Spleen (tissue), 13 donors: ENCODE measurements at regions of chr3 and their contacts with region 1.

Region 1: DNA sequence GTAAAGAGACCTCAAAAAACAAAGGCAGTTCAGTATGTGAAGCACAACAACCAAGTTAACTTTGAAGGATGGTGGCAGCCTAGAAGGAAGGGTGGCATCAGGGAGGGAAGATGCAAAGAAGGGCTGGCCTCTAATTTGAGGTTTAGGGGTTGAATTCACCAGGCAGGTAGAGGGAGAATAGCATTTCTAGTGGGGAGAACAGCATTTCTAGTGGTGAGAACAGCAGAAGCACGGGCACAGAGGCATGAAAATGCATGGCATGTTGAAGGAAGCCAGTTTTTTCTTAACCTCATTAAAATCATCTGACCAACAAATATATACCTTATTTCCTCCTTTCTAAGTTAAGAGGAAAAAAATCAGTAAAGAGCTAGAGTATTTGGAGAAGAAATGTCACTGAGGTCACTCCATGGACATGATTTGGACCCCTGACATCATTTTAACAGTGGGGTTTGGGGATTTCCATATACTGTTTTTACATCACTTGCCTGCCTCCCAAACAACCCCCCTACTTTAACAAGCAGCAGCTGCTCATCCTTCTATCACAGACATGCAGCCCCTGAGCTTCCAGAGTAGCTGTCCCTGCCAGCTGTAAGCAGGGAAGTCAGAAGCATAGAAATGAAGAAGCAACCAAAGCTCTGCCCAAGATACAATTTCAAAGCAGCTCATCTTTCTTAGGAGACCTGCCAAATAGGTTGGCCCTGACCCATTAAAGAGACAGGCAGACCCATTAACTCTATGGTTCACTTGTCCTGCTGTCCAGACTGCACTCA is 2.4 kb upstream of the POPDC2 start:
- DNase-seq: no peak
- H3K4me3 ChIP-seq: no peak overlapping the region
- H3K27ac ChIP-seq: peak overlapping the region in 7 of 8 donors; percentile 12 to 59 (median 32)
- H3K4me1 ChIP-seq: peaks cover 0 to 54% (median 22%) of the 10 kb centered on the region in 6 donors
- H3K27me3 ChIP-seq: no peaks in the 10 kb centered on the region
- CTCF ChIP-seq: peak in 1 of 11 experiments; percentile 4
- POLR2A ChIP-seq: no peak

Region 2: GRCh38 chr3:118772547-118773011 is 890.2 kb before region 1 on chr3:
- intact Hi-C with region 1: no loop called
- DNase-seq: no peak
- H3K4me3 ChIP-seq: no peak overlapping the region
- H3K27ac ChIP-seq: no peak overlapping the region
- H3K4me1 ChIP-seq: no peaks in the 10 kb centered on the region
- H3K27me3 ChIP-seq: no peaks in the 10 kb centered on the region
- CTCF ChIP-seq: no peak
- POLR2A ChIP-seq: no peak

Region 3: GRCh38 chr3:119579366-119580165 is 83.2 kb before region 1 on chr3 and contains the start of gene ADPRH:
- intact Hi-C with region 1: loop called (anchors 10 kb)
- DNase-seq: peak; percentile 94
- H3K4me3 ChIP-seq: peak within 1 kb of the TSS; percentile 43 to 74 (median 54)
- H3K27ac ChIP-seq: peak within 1 kb of the TSS; percentile 89 to 94 (median 91)
- H3K4me1 ChIP-seq: peaks cover 0 to 38% (median 22%) of the 10 kb centered on the region in 6 donors
- H3K27me3 ChIP-seq: no peaks in the 10 kb centered on the region
- CTCF ChIP-seq: no peak
- POLR2A ChIP-seq: no peak
- total RNA-seq, gene ADPRH: 16.1 to 29.2 (median 24.3) TPM

Region 4: GRCh38 chr3:119598410-119599098 is 64.2 kb before region 1 on chr3:
- intact Hi-C with region 1: no loop called
- DNase-seq: no peak
- H3K4me3 ChIP-seq: no peak overlapping the region
- H3K27ac ChIP-seq: peak overlapping the region in 2 of 8 donors; percentile 75 to 80
- H3K4me1 ChIP-seq: peaks cover 0 to 42% (median 24%) of the 10 kb centered on the region in 6 donors
- H3K27me3 ChIP-seq: no peaks in the 10 kb centered on the region
- CTCF ChIP-seq: no peak
- POLR2A ChIP-seq: no peak

Region 5: DNA sequence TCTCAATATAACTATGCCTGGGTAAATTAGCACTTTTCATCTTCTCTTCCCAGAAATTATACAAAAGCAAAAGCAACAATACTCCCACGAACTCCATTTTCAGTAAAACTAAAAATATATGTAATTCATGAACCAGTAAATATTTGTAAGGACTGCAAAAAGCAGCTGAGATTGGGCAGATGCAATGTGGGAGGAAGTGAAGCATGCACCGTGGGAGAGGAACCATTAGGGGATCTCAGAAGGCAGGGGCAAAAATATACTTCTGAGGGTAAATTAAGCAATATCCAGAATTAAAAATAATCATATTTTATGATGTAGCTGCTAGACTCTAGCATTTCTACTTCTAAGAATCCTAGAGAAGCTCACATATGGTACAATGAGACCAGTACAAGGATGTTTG is 60.2 kb after region 1 on chr3:
- intact Hi-C with region 1: no loop called
- DNase-seq: no peak
- H3K4me3 ChIP-seq: no peak overlapping the region
- H3K27ac ChIP-seq: no peak overlapping the region
- H3K4me1 ChIP-seq: peaks cover 0 to 5% (median 0%) of the 10 kb centered on the region in 6 donors
- H3K27me3 ChIP-seq: no peaks in the 10 kb centered on the region
- CTCF ChIP-seq: no peak
- POLR2A ChIP-seq: no peak